Activated CD8-positive, alpha-beta T cell treated with anti-CD3 and anti-CD28 coated beads for 36 hours (primary cell): ENCODE measurements at regions of chr2 and their contacts with region 1.

Region 1: DNA sequence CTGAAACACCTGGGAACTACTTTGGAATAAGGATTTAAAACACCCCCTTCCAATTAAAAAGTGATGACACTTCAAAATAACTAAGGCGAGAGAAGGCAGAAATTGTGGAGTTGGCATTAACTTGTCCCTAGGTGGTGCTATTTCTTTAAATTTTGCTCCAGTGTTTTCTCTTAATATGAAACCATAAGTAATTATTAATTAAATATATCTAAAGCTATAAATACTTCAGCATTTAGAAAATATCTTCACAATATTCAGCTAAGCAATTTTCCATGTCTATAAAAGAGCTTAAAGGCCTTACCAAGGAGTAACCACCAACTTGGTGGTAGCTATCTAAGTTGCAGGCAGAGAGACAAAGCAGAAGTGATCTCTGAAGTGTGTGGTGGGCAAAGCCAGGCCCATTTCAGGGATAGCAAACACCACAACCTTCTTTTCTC is 186.8 kb upstream of the PGAP1 start:
- DNase-seq: no peak
- ATAC-seq: no peak
- H3K4me3 Mint-ChIP-seq: no peak overlapping the region
- H3K27ac Mint-ChIP-seq: peak overlapping the region; percentile 82
- H3K4me1 Mint-ChIP-seq: peaks cover 32% of the 10 kb centered on the region
- H3K27me3 Mint-ChIP-seq: no peaks in the 10 kb centered on the region
- CTCF ChIP-seq: peak; percentile 75

Region 2: GRCh38 chr2:196926562-196927375 is 186.5 kb before region 1 on chr2 and contains the start of gene PGAP1:
- CTCF ChIA-PET with region 1: no interaction called
- POLR2A ChIA-PET with region 1: no interaction called
- intact Hi-C with region 1: no loop called
- DNase-seq: peak; percentile 94
- ATAC-seq: peak; percentile 89
- H3K4me3 Mint-ChIP-seq: peak within 1 kb of the TSS; percentile 90
- H3K27ac Mint-ChIP-seq: peak within 1 kb of the TSS; percentile 99
- H3K4me1 Mint-ChIP-seq: peaks cover 30% of the 10 kb centered on the region
- H3K27me3 Mint-ChIP-seq: no peaks in the 10 kb centered on the region
- CTCF ChIP-seq: no peak
- total RNA-seq, gene PGAP1: 17.7 to 19.2 TPM

Region 3: GRCh38 chr2:197137231-197137630 is 23.9 kb after region 1 on chr2:
- CTCF ChIA-PET with region 1: interaction called, 45 read pairs
- POLR2A ChIA-PET with region 1: interaction called, 5 read pairs
- intact Hi-C with region 1: no loop called
- DNase-seq: no peak
- ATAC-seq: no peak
- H3K4me3 Mint-ChIP-seq: no peak overlapping the region
- H3K27ac Mint-ChIP-seq: peak overlapping the region; percentile 88
- H3K4me1 Mint-ChIP-seq: peaks cover 89% of the 10 kb centered on the region
- H3K27me3 Mint-ChIP-seq: no peaks in the 10 kb centered on the region
- CTCF ChIP-seq: no peak

Region 4: GRCh38 chr2:197179744-197180498 is 66.6 kb after region 1 on chr2:
- CTCF ChIA-PET with region 1: interaction called, 28 read pairs
- POLR2A ChIA-PET with region 1: no interaction called
- intact Hi-C with region 1: loop called (anchors 5 kb)
- DNase-seq: no peak
- ATAC-seq: no peak
- H3K4me3 Mint-ChIP-seq: no peak overlapping the region
- H3K27ac Mint-ChIP-seq: peak overlapping the region; percentile 26
- H3K4me1 Mint-ChIP-seq: peaks cover 67% of the 10 kb centered on the region
- H3K27me3 Mint-ChIP-seq: no peaks in the 10 kb centered on the region
- CTCF ChIP-seq: no peak

Region 5: DNA sequence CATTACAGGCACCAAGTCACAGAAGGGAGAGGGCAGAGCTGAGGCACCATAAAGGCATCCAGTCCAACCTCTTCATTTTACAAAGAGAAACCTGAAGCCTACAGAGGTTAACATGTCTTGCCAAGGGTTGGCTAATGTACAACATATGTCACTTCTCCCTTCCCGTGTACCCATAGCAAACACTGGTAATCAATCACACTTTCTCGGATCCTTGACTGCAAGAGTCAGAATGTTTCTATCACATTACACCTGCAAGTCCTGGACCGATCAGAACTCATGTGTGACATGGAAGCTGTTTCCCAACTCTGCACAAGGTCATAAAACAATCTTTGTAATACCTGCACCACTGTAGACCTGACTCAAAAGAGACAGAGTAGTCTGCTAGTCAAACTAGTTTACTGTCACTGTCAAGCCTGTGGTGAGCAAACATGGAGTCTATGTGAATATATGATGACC is 191.3 kb after region 1 on chr2:
- CTCF ChIA-PET with region 1: interaction called, 23 read pairs
- POLR2A ChIA-PET with region 1: no interaction called
- intact Hi-C with region 1: loop called (anchors 5 kb)
- DNase-seq: peak; percentile 55
- ATAC-seq: peak; percentile 38
- H3K4me3 Mint-ChIP-seq: peak overlapping the region; percentile 96
- H3K27ac Mint-ChIP-seq: peak overlapping the region; percentile 99
- H3K4me1 Mint-ChIP-seq: peaks cover 73% of the 10 kb centered on the region
- H3K27me3 Mint-ChIP-seq: no peaks in the 10 kb centered on the region
- CTCF ChIP-seq: no peak

Region 6: GRCh38 chr2:197356136-197356535 is 242.8 kb after region 1 on chr2:
- CTCF ChIA-PET with region 1: interaction called, 10 read pairs
- POLR2A ChIA-PET with region 1: interaction called, 4 read pairs
- intact Hi-C with region 1: no loop called
- DNase-seq: peak; percentile 12
- ATAC-seq: peak; percentile 37
- H3K4me3 Mint-ChIP-seq: peak overlapping the region; percentile 1
- H3K27ac Mint-ChIP-seq: no peak overlapping the region
- H3K4me1 Mint-ChIP-seq: peaks cover 36% of the 10 kb centered on the region
- H3K27me3 Mint-ChIP-seq: no peaks in the 10 kb centered on the region
- CTCF ChIP-seq: no peak